Prostate gland (tissue), 2 donors: ENCODE measurements at regions of chr12 and their contacts with region 1.

Region 1: DNA sequence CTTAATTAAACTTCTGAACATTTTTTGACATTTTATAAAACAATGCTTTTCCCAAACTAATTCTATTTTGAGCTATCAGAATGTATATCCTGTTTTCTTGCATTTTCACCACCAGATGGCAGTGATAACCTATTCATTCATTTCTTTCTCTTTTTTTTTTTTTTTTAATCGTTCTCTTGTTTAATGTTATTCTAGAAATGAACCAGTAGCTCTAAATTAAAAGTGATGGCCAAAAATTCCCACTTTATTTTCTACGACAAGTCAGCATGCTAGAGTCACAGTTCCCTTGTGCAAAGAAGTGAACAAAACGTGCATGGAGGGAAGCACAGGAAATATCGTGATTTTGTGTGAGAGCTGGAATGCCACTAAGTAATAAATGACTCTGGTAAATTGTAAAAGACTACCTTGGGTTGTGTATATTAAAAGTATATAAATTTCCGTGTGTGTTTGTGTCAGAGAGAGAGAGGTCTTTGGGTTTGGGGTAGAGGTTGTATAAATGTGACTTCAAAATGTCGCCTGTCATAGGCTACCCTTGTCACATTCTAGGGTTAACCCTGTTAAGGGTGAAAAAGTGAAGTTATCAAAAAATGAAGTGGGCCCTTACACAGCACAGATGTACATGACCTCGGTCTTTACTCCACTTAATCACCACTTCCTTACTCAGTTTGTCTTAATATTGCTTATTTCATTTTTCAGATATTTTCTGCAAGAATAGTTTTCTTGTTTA is 40.4 kb upstream of the LDHB start:
- DNase-seq: no peak
- H3K4me3 ChIP-seq: no peak overlapping the region
- H3K27ac ChIP-seq: no peak overlapping the region
- H3K4me1 ChIP-seq: no peaks in the 10 kb centered on the region
- H3K27me3 ChIP-seq: no peaks in the 10 kb centered on the region
- CTCF ChIP-seq: peak; percentile 52 to 75 (median 68)
- POLR2A ChIP-seq: no peak

Region 2: GRCh38 chr12:21731144-21731543 is 33.1 kb after region 1 on chr12:
- intact Hi-C with region 1: no loop called
- DNase-seq: no peak
- H3K4me3 ChIP-seq: no peak overlapping the region
- H3K27ac ChIP-seq: no peak overlapping the region
- H3K4me1 ChIP-seq: peaks cover 4% of the 10 kb centered on the region
- H3K27me3 ChIP-seq: no peaks in the 10 kb centered on the region
- CTCF ChIP-seq: no peak
- POLR2A ChIP-seq: no peak

Region 3: GRCh38 chr12:21989819-21990412 is 291.8 kb after region 1 on chr12:
- intact Hi-C with region 1: loop called (anchors 2 kb)
- DNase-seq: no peak
- H3K4me3 ChIP-seq: no peak overlapping the region
- H3K27ac ChIP-seq: no peak overlapping the region
- H3K4me1 ChIP-seq: no peaks in the 10 kb centered on the region
- H3K27me3 ChIP-seq: no peaks in the 10 kb centered on the region
- CTCF ChIP-seq: peak in 3 of 4 experiments; percentile 48 to 63 (median 57)
- POLR2A ChIP-seq: no peak